Activated CD4-positive, alpha-beta T cell treated with anti-CD3 and anti-CD28 coated beads, Interleukin-2, amount 10 ng/mL, durations not matched to agents 24 days and 14 days (primary cell): ENCODE measurements at regions of chr9 and their contacts with region 1.

Region 1: GRCh38 chr9:33024966-33025571 is at the start of gene DNAJA1:
- DNase-seq: peak; percentile 99
- H3K4me3 Mint-ChIP-seq: peak within 1 kb of the TSS; percentile 99
- H3K27ac Mint-ChIP-seq: peak within 1 kb of the TSS; percentile 97
- H3K4me1 Mint-ChIP-seq: peaks cover 57% of the 10 kb centered on the region
- H3K27me3 Mint-ChIP-seq: no peaks in the 10 kb centered on the region
- total RNA-seq, gene DNAJA1: 319 and 328 TPM in 2 replicates

Region 2: GRCh38 chr9:32550562-32551433 is 474.3 kb before region 1 on chr9:
- intact Hi-C with region 1: loop called (anchors 1 kb)
- DNase-seq: peak; percentile 98
- H3K4me3 Mint-ChIP-seq: peak overlapping the region; percentile 99
- H3K27ac Mint-ChIP-seq: peak overlapping the region; percentile 100
- H3K4me1 Mint-ChIP-seq: peaks cover 40% of the 10 kb centered on the region
- H3K27me3 Mint-ChIP-seq: no peaks in the 10 kb centered on the region

Region 3: GRCh38 chr9:33044127-33044673 is 19.1 kb after region 1 on chr9:
- intact Hi-C with region 1: loop called (anchors 1 kb)
- DNase-seq: peak; percentile 89
- H3K4me3 Mint-ChIP-seq: peak overlapping the region; percentile 73
- H3K27ac Mint-ChIP-seq: peak overlapping the region; percentile 55
- H3K4me1 Mint-ChIP-seq: peaks cover 12% of the 10 kb centered on the region
- H3K27me3 Mint-ChIP-seq: no peaks in the 10 kb centered on the region

Region 4: DNA sequence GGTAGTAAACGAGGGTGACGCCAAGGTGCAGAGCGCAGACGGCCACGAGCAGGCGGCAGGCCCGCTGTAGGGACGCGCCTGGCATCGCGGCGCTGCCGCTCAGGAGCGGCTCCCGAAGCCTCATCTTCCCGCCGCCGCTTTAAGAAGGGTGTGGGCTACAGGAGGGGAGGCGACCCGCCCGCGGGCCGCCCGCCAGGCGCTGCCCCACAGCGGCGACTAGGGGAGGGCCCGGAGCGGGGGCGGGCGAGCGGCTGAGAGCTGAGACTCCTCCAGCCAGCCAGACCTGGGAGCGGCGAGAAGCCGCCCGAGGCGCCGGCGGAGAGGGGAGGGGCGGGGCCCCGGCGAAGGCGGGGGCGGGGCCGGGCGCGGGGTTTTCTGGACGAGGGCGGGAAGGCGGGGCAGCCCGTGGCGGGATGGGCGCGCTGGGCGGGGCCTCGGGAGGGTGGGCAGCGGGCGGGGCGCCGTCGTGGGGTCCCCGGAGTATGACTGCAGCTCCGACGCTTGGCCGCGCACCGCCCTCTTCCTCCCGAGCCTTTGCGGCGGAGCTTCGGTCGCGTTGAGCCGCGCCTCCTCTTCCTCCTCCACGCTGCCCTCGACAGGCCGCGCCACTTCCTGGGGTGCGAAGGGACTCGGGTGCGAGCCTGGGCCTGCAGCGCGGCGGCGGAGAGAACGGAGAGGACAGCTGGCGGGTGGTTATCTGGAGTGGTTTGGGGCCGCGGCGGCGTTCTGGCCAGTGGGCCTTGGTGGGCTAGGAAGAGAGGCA is 142.2 kb after region 1 on chr9 and contains the start of gene B4GALT1:
- intact Hi-C with region 1: loop called (anchors 1 kb)
- DNase-seq: peak; percentile 97
- H3K4me3 Mint-ChIP-seq: peak within 1 kb of the TSS; percentile 95
- H3K27ac Mint-ChIP-seq: peak within 1 kb of the TSS; percentile 98
- H3K4me1 Mint-ChIP-seq: peaks cover 65% of the 10 kb centered on the region
- H3K27me3 Mint-ChIP-seq: no peaks in the 10 kb centered on the region
- total RNA-seq, gene B4GALT1: 53.8 and 55.7 TPM in 2 replicates

Region 5: GRCh38 chr9:33264473-33265177 is 239.6 kb after region 1 on chr9 and contains the starts of genes BAG1 and CHMP5:
- intact Hi-C with region 1: loop called (anchors 1 kb)
- DNase-seq: peak; percentile 100
- H3K4me3 Mint-ChIP-seq: peak within 1 kb of the TSS; percentile 97
- H3K27ac Mint-ChIP-seq: peak within 1 kb of the TSS; percentile 99
- H3K4me1 Mint-ChIP-seq: peaks cover 52% of the 10 kb centered on the region
- H3K27me3 Mint-ChIP-seq: no peaks in the 10 kb centered on the region
- total RNA-seq, gene BAG1: 72.4 and 73.6 TPM in 2 replicates
- total RNA-seq, gene CHMP5: 73.9 and 77.7 TPM in 2 replicates